ENCODE measurements at regions of chr1 and their contacts with region 1.

Region 1: GRCh38 chr1:40373338-40374283 is at the start of gene SMAP2:
- DNase-seq: peak; percentile 99
- CTCF ChIP-seq: no peak

Region 2: DNA sequence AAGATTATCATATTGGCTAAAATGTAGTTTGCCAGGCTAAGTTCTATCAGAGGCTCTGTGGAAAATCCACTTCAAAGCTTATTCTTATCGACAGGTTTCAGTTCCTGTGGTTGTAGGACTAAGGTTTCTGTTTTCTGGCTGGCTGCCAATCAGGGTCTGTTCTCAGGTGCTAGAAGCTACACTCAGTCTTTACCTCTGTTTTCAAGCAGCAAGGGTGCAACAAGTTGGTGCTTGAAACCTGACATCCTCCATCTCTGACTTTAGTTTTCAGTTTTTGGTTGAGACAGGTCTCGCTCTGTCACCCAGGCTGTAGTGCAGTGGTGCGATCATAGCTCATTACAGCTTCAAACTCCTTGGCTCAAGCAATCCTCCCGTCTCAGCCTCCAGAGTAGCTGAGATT is 141.2 kb before region 1 on chr1:
- CTCF ChIA-PET with region 1: no interaction called
- POLR2A ChIA-PET with region 1: no interaction called
- DNase-seq: peak; percentile 73
- CTCF ChIP-seq: no peak

Region 3: GRCh38 chr1:40385437-40386358 is 12.1 kb after region 1 on chr1:
- CTCF ChIA-PET with region 1: interaction called, 25 read pairs
- POLR2A ChIA-PET with region 1: interaction called, 14 read pairs
- DNase-seq: peak; percentile 52
- CTCF ChIP-seq: no peak

Region 4: DNA sequence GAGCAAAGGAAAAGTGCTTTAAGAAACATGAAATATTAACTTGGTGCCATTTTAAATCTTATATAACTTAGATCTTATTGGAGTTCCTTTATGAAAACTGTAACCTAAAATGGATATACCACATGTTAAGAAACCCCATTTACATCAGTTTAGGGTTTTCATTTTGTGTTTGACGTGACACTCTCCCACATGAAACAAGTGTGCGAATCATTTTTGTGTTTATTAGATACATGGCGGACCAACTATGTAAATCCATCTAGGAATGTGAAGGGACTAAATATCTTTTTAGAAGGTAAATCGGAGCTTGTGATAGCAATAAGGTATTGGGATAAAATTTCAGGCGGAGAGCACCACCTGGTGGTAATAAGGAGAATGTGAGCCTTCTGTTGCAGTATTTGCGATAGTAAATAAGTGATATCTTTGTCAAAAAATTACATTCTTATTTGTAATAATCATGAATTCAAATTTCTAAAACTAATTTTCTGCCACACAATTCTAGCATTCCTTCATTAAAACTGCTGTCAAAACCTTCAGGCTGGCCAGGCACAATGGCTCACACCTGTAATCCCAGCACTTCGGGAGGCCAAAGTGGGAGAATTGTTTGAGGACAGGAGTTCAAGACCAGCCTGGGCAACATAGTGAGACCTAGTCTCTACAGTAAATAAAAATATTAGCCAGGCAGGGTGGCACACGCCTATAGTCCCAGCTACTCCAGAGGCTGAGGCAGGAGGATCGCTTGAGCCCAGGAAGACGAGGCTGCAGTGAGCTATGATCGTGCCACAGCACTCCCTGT is 31.3 kb after region 1 on chr1:
- CTCF ChIA-PET with region 1: interaction called, 13 read pairs
- POLR2A ChIA-PET with region 1: interaction called, 4 read pairs
- DNase-seq: no peak
- CTCF ChIP-seq: peak; percentile 69

Region 5: DNA sequence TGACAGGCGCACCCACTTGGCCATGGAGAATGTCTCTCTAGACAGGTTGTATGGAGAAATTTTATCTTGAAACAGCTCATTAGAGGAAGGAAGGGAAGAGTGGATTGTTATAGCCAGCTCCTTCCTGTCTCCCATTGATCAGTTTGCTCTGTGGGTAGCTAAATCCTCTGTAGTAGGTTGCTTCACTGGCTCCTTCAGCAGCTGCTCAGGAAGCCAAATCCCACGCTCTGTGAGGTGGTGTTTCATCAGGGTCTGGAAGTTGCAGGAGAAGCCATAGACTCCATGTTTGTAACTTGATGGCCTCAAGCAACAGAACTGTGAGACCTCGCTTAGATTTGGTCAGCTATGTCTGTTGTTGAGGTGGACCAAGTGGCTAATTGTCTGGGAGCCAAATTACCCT is 311.1 kb after region 1 on chr1:
- CTCF ChIA-PET with region 1: no interaction called
- POLR2A ChIA-PET with region 1: no interaction called
- DNase-seq: no peak
- CTCF ChIP-seq: no peak

Region 6: DNA sequence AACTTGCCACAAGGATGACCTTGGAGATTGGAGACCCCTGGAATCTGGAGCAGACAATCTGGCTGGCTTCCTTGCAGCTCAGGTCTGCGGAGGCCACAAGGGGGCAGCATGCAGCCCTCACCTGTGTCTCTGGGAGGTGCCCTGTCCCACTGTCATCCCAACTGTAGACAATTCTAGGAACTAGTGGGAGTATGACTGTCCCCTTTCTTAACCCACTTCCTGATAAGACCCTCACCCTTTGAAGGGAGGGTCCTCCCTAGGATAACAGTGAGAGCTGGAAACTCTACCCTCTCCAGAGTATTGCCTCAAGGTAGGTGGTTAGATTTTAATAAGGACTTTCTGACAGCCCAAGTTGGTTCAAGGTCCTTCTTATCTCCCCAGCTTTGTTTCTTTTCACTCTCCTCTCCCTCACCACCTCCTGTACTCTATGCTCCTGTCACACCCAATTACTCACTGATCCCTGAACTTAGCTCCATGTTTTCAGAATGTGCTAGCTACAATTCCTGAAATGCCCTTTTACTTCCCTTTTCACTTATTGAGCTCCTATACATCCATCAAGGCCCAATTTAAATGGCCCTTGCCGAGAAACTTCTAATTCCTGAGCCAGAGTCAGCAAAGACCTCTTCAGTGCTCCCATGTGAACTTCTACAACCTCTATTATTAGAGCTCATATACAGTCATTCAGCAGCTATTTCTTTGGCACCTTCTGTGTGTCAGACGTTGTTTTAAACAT is 400.8 kb after region 1 on chr1:
- CTCF ChIA-PET with region 1: no interaction called
- POLR2A ChIA-PET with region 1: no interaction called
- DNase-seq: peak; percentile 68
- CTCF ChIP-seq: peak; percentile 84

Measured in GM10248 (cell line).